ENCODE measurements at regions of chr7 and their contacts with region 1.

Region 1: GRCh38 chr7:33692956-33693355 is 212.4 kb upstream of the BMPER start:
- DNase-seq: peak; percentile 62
- ATAC-seq: peak; percentile 86
- H3K4me3 ChIP-seq: no peak overlapping the region
- H3K27ac ChIP-seq: peak overlapping the region; percentile 64
- H3K4me1 ChIP-seq: peaks cover 15% of the 10 kb centered on the region
- H3K27me3 ChIP-seq: no peaks in the 10 kb centered on the region
- CTCF ChIP-seq: no peak

Region 2: DNA sequence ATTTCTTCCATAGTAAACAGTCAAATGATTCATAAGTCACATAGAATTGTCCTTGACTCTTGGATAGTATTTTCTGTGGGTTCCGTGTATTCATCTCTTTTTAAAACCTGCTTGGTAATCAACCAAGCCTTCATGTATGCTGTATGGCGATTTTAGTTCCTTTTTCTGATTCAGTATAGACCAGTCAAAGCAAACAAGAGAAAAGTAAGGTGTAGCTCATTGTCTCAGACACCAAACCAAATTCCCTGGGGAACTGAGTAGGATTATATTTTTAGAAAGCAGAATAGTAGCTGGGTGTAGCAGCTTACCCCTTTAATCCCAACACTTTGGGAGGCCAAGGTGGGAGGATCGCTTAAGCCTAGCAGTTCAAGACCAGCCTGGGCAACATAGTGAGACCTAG is 323.1 kb before region 1 on chr7:
- CTCF ChIA-PET with region 1: no interaction called
- POLR2A ChIA-PET with region 1: no interaction called
- intact Hi-C with region 1: no loop called
- DNase-seq: no peak
- ATAC-seq: no peak
- H3K4me3 ChIP-seq: no peak overlapping the region
- H3K27ac ChIP-seq: no peak overlapping the region
- H3K4me1 ChIP-seq: no peaks in the 10 kb centered on the region
- H3K27me3 ChIP-seq: no peaks in the 10 kb centered on the region
- CTCF ChIP-seq: no peak

Region 3: GRCh38 chr7:33677556-33677955 is 15.4 kb before region 1 on chr7:
- CTCF ChIA-PET with region 1: no interaction called
- POLR2A ChIA-PET with region 1: no interaction called
- intact Hi-C with region 1: loop called (anchors 2 kb)
- DNase-seq: peak; percentile 94
- ATAC-seq: peak; percentile 91
- H3K4me3 ChIP-seq: no peak overlapping the region
- H3K27ac ChIP-seq: peak overlapping the region; percentile 86
- H3K4me1 ChIP-seq: peaks cover 28% of the 10 kb centered on the region
- H3K27me3 ChIP-seq: no peaks in the 10 kb centered on the region
- CTCF ChIP-seq: no peak